ENCODE measurements at regions of chr1 and their contacts with region 1.

Region 1: DNA sequence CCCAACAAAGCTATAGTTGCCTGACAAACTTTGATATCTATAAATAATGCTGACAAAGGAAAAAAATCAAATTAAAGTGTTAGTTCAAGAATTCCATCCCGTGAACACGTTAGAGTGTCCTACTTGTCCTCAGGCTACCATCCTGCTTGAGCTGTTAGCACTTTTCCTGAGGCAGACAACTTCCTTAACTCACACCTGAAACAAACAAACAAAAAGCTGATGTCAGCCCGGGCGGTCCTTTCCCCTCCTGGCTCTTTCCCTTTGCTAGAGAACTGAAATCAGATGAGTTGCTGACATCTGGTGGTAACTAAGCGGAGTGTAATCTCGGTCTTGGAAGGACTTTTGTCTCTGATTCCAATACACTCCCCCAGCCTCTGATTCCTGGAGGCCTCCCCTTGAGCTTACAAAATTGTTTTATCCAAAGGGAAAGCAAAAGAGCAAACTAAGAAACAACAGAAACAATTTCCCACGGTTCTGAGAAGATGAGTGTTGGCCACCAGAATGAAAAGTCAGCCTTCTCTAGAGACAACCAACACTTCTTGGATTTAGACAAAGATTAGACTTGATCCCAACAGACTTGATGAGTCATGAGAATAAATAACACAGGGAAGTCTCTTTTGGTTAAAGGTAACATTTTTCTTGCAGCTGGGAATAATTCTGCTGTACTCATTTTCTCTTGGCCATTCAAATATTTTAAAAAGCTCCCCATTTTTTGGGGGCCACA is 135.4 kb downstream of the PROX1 start:
- DNase-seq: peak; percentile 58
- CTCF ChIP-seq: peak; percentile 58

Region 2: GRCh38 chr1:213122514-213122929 is 1000.7 kb before region 1 on chr1:
- in situ Hi-C with region 1: loop called (anchors 10 kb)
- DNase-seq: no peak
- CTCF ChIP-seq: peak; percentile 43

Measured in GM13977 (cell line).